ENCODE measurements at regions of chr16 and their contacts with region 1.

Region 1: DNA sequence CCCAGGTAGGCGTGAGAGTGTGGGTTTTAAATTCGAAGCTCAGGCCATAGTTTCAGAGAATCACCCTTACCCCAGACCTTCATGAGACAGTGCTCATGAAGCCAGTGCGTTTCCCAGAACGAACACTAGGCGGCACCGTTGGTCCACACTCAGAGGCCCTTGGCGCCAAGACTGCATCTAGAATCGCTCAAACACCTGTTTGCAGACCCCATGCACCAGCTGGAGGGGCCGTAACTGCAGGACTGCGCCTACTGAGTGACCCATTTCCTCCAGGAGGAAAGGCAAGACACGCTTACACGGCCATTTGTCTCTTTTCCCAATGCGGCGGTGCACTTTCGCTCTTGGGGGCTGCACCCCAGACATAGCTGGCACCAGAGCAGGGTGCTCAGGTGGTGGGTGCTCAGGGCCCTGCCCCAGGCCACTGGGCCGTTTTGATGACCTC is 34.0 kb downstream of the ADGRG5 start:
- DNase-seq: peak; percentile 90
- H3K4me3 Mint-ChIP-seq: no peak overlapping the region
- H3K27ac Mint-ChIP-seq: no peak overlapping the region
- H3K4me1 Mint-ChIP-seq: peaks cover 29% of the 10 kb centered on the region
- H3K27me3 Mint-ChIP-seq: no peaks in the 10 kb centered on the region

Region 2: DNA sequence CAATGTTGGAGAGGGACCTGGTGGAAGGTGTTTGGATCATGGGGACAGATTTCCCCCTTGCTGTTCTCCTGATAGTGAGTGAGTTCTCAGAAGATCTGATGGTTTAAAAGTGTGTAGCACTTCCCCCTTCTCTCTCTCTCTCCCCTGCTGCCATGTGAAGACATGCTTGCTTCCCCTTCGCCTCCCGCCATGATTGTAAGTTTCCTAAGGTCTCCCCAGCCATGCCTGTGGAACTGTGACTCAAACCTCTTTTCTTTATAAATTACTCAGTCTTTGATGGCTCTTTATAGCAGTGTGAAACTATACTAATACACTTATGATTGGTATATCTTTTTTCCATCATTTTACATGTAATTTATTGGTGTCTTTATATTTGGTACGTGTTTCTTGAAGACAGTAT is 20.6 kb before region 1 on chr16:
- CTCF ChIA-PET with region 1: interaction called, 10 read pairs
- POLR2A ChIA-PET with region 1: no interaction called
- intact Hi-C with region 1: no loop called
- DNase-seq: no peak
- H3K4me3 Mint-ChIP-seq: no peak overlapping the region
- H3K27ac Mint-ChIP-seq: no peak overlapping the region
- H3K4me1 Mint-ChIP-seq: peaks cover 8% of the 10 kb centered on the region
- H3K27me3 Mint-ChIP-seq: no peaks in the 10 kb centered on the region

Region 3: DNA sequence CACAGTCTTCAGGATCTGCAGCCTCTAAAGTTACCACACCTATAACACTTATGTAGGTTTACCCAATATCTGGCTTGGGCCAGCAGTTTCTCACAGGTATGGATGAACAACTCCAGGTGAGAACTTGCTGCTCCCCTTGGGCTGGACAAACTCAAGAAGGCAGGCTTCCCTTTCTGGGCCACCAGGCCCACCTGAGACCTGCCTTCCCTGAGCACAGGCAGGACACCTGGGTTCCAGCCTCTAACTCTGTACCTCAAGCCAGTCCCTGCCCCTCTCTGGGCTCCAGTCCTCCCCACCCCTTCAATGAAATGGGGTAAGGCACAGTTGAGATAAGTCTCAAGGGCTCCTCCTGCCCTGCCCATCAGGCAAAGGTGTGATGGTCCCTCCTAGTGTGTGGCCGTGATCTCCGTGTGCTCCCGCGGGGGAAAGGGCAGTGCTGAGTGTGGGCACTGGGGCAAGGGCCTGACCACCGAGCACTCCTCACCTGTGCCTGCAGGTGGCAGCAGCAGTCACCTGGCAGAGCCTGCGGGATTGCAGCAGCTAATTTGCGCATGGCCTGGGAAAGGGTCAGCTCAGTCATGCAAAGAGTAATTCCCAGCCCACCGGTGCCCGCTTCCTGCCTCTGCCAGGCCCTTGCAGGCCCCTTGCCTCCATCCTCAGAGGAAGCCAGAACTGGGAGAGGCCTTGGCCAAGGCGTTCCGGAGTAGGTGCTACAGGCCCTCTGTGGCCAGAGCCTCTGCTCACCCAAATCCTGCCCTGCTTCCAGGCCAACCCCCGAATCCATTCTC is 23.8 kb after region 1 on chr16:
- CTCF ChIA-PET with region 1: interaction called, 50 read pairs
- POLR2A ChIA-PET with region 1: interaction called, 4 read pairs
- intact Hi-C with region 1: no loop called
- DNase-seq: peak; percentile 71
- H3K4me3 Mint-ChIP-seq: no peak overlapping the region
- H3K27ac Mint-ChIP-seq: no peak overlapping the region
- H3K4me1 Mint-ChIP-seq: peaks cover 31% of the 10 kb centered on the region
- H3K27me3 Mint-ChIP-seq: no peaks in the 10 kb centered on the region

Region 4: DNA sequence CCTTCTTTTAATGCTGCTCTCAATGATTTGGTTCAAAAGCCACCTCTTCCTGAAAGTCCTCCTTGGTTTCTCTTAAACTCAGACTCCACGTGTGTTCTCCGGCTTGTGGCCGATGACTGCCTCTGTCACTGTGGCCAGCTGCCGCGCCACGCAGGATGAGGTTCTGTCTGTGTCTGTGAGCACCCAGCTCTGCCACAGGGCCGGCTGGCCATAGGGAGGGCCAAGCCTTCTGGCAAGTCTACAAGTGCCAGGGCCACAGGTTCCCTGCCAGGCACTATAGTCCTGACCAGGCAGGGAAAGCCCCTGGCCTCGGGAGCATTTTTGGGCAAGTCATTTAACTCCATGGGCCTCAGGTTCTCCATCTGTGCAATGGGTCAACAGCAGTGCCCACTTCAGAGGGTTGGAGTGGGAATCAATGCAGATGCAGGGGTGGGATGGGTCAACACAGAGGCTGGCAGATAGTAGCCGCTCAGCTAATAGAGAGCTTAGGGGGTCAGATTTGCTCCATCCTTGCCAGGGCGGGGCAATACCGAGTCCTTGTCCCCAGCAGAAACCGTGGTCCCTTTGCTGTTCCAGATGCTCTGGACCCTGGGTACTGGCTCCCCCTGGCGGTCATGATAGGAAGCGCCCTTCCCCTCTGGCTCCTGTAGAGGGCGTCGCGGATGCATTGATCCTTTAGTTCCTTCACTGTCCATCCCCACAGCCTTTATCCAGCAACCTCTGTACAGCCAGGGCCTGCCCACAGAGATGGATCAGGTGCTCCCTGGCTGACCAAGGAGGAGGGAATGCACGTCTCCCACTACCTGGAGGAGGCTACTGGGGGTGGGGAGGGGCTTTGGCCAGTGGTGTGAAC is 72.4 kb after region 1 on chr16:
- CTCF ChIA-PET with region 1: interaction called, 197 read pairs
- POLR2A ChIA-PET with region 1: interaction called, 4 read pairs
- intact Hi-C with region 1: loop called (anchors 1 kb)
- DNase-seq: peak; percentile 94
- H3K4me3 Mint-ChIP-seq: no peak overlapping the region
- H3K27ac Mint-ChIP-seq: no peak overlapping the region
- H3K4me1 Mint-ChIP-seq: peaks cover 21% of the 10 kb centered on the region
- H3K27me3 Mint-ChIP-seq: no peaks in the 10 kb centered on the region

Region 5: DNA sequence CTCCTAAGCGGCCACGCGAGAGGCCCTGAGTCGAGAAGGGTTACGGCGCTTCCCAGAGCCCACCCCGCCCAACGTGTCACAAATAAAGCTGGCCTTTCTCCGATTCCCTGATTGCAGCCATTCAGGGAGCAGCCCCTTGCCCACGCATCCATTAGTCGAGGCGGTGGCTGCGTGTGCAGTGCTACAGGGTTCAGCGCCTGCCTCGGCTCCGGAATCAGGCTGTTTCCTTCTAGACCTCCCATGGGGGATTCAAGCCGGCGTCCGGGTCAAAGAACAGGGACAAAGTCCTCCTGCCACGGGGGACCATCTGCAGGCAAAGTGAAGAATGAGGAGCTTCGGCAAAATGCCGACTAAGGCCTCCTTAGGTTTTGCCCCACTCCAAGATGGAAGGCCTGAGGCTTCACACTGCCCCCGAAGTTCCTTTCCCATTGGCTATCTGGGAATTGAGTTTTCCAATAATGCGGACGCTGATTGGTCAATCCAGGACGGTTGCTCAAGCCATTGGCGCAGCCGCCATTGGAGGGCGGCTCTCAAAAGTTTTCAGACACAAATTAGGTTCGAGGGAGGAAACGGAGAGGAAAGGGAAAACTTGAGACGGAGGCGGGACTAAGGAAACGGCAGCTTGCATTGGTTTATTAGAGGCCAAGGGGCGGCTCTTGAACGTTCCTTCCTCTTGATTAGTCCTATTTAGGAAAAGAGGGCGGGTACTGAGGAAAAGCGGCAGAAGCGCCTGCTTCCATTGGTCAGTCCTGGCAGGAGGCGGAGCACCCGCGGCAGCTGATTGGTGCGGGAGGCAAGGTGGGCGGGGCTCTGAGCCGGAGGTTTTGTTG is 158.7 kb after region 1 on chr16:
- CTCF ChIA-PET with region 1: interaction called, 30 read pairs
- POLR2A ChIA-PET with region 1: no interaction called
- intact Hi-C with region 1: loop called (anchors 5 kb)
- DNase-seq: peak; percentile 98
- H3K4me3 Mint-ChIP-seq: peak overlapping the region; percentile 99
- H3K27ac Mint-ChIP-seq: peak overlapping the region; percentile 87
- H3K4me1 Mint-ChIP-seq: peaks cover 27% of the 10 kb centered on the region
- H3K27me3 Mint-ChIP-seq: peaks cover 2% of the 10 kb centered on the region

Measured in activated CD4-positive, alpha-beta memory T cell treated with anti-CD3 and anti-CD28 coated beads for 36 hours (primary cell).